ENCODE measurements at regions of chrX and their contacts with region 1.

Region 1: GRCh38 chrX:149504915-149505651 is at the start of gene IDS:
- DNase-seq: peak; percentile 81
- H3K4me3 ChIP-seq: peak within 1 kb of the TSS; percentile 47 to 73 (median 61)
- H3K27ac ChIP-seq: peak within 1 kb of the TSS; percentile 75
- H3K4me1 ChIP-seq: peaks cover 16% of the 10 kb centered on the region
- H3K27me3 ChIP-seq: no peaks in the 10 kb centered on the region
- CTCF ChIP-seq: peak in 1 of 2 donors; percentile 7
- total RNA-seq, gene IDS: 56.8 to 57.7 TPM

Region 2: DNA sequence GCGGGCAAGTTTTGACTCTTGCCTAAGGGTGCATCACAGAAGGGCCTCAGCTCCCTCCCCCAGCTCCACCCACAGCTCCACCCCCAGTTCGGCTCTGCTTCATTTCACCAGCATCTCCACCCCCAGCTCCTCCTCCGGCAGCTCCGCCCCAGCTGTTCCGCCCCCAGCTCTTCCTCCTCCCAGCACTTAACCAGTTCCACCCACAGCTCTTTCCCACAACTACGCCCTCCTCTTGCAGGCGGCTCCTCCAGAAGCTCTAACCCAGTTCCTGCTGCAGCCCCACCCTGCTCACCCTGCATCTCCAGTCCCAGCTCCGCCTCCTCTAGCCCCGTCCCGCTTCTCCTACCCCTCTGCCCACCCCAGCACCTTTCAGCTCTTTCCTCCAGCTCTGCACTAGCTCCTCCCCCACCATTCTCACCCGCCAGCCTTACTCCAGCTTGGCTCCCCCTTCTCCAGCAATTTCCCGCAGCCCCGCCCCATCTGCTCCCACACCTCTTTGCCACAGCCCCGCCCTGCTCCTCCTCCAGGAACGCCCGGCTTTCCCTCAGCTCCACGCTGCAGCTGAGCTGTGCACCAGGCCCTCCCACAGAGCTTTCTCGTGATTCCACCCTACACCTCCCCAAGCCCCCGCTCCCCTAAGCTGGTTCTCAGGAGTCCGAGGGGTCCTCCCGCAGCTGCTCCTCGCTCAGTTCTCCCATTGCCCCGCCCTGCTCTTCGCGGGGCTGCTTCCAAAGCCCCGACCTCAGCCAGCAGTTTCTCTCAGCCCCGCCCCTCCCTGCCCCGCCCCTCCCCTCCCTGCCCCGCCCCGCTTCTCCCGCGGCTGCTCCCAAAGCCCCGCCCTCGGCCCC is 34.4 kb after region 1 on chrX:
- CTCF ChIA-PET with region 1: interaction called, 17 read pairs
- dilution Hi-C with region 1: no loop called
- in situ Hi-C with region 1: no loop called
- intact Hi-C with region 1: no loop called
- DNase-seq: peak; percentile 88
- H3K4me3 ChIP-seq: peak overlapping the region; percentile 48 to 57 (median 51)
- H3K27ac ChIP-seq: peak overlapping the region; percentile 0
- H3K4me1 ChIP-seq: peaks cover 6% of the 10 kb centered on the region
- H3K27me3 ChIP-seq: no peaks in the 10 kb centered on the region
- CTCF ChIP-seq: no peak

Region 3: GRCh38 chrX:149611623-149612175 is 106.6 kb after region 1 on chrX:
- CTCF ChIA-PET with region 1: no interaction called
- dilution Hi-C with region 1: loop called (anchors 25 kb)
- in situ Hi-C with region 1: no loop called
- intact Hi-C with region 1: no loop called
- DNase-seq: no peak
- H3K4me3 ChIP-seq: no peak overlapping the region
- H3K27ac ChIP-seq: no peak overlapping the region
- H3K4me1 ChIP-seq: no peaks in the 10 kb centered on the region
- H3K27me3 ChIP-seq: no peaks in the 10 kb centered on the region
- CTCF ChIP-seq: no peak

Region 4: GRCh38 chrX:149631234-149632165 is 126.4 kb after region 1 on chrX and contains the start of gene TMEM185A:
- CTCF ChIA-PET with region 1: no interaction called
- dilution Hi-C with region 1: no loop called
- in situ Hi-C with region 1: loop called in 1 of 2 experiments (anchors 25 kb)
- intact Hi-C with region 1: no loop called
- DNase-seq: peak; percentile 21
- H3K4me3 ChIP-seq: peak within 1 kb of the TSS; percentile 64 to 66 (median 65)
- H3K27ac ChIP-seq: peak within 1 kb of the TSS; percentile 26
- H3K4me1 ChIP-seq: peaks cover 25% of the 10 kb centered on the region
- H3K27me3 ChIP-seq: no peaks in the 10 kb centered on the region
- CTCF ChIP-seq: no peak
- total RNA-seq, gene TMEM185A: 19.6 to 19.7 TPM